Sigmoid colon (tissue), 7 donors: ENCODE measurements at regions of chrX and their contacts with region 1.

Region 1: DNA sequence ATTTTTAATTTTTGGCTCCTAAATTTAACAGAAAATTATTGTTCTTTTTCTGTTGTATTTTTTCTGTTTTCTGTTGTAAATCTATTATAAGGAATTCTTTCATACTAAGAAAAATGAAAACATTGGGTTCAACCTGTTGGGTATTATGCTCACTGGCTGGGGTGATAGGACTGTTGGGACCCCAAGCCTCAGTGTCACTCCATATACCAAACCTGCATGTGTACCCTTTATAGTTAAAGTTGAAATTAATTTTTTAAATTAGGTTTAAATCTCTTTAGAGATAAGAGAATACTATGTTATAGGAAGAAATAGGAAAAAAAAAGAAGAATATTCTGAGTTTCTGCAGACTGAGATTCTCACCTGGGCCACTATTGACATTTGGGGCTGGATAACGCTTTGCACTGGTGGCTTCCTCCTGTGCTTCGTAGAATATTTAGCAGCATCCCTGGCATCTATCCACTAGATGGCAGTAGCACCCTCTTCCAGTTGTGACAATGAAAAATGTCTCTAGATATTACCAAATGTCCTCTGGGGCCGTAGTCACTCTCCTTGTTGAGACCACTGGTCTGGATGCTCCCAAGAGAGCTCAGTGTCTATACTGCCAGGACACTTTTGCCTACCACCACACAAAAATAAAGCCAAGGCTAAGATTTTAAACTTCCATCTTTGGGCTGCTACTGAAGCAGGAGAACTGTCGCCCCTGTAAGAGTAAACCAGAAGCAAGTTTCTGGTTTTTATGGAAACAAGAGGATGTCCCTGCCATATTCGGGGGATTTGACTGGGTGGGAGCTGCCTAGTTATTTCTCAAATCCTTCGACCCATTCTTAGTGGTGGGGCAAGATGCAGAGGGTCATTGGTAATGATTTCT is 22.4 kb upstream of the CLTRN start:
- DNase-seq: no peak
- H3K4me3 ChIP-seq: no peak overlapping the region
- H3K27ac ChIP-seq: no peak overlapping the region
- H3K4me1 ChIP-seq: no peaks in the 10 kb centered on the region
- H3K27me3 ChIP-seq: no peaks in the 10 kb centered on the region
- CTCF ChIP-seq: peak in 3 of 4 experiments; percentile 18 to 63 (median 23)
- EP300 ChIP-seq: no peak
- POLR2A ChIP-seq: no peak

Region 2: DNA sequence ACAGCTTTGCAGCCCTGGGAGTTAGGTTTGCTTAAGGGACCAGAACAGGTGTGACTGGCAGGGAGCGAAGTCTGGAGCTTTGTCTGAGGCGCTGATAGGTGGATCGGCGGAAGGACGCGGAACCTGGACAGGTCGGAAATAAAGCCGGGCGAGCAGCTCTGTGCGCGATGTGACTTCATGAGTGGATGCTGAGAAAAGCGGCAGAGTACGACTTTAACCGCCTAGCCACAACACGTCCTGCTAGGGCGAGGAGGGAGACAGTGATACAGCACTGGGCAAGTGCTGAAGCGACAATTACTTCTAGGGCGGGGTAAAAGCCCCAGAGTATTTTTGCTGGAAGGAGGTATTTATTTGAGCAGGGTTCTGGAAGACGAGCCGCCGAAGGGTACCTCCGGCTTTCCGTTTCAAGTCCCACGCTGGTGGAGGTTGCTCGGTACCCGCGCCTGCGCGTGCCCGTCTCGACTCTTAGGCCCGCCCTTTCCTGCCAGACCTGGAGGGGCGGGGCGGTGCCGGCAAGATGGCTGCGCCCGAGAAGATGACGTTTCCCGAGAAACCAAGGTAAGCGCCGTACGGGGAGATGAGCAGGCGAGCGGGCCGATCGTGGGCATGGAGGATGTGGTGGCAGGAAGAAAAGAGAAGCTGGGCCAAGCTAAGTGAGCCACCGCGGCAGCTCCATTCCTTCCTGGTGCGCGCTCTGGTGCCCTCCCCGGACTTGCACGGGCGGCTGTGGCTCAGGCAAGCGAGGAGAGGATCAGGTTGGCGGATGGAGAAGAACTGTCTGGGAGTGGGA is 103.1 kb after region 1 on chrX and contains the start of gene ZRSR2:
- intact Hi-C with region 1: loop called (anchors 1 kb)
- DNase-seq: peak; percentile 92
- H3K4me3 ChIP-seq: peak within 1 kb of the TSS; percentile 59 to 88 (median 63)
- H3K27ac ChIP-seq: peak within 1 kb of the TSS; percentile 80 to 90 (median 84)
- H3K4me1 ChIP-seq: peaks cover 0 to 23% (median 4%) of the 10 kb centered on the region in 4 donors
- H3K27me3 ChIP-seq: no peaks in the 10 kb centered on the region
- CTCF ChIP-seq: no peak
- EP300 ChIP-seq: no peak
- POLR2A ChIP-seq: peak; percentile 46 to 48
- total RNA-seq, gene ZRSR2: 6.8 to 13.8 (median 11.8) TPM

Region 3: DNA sequence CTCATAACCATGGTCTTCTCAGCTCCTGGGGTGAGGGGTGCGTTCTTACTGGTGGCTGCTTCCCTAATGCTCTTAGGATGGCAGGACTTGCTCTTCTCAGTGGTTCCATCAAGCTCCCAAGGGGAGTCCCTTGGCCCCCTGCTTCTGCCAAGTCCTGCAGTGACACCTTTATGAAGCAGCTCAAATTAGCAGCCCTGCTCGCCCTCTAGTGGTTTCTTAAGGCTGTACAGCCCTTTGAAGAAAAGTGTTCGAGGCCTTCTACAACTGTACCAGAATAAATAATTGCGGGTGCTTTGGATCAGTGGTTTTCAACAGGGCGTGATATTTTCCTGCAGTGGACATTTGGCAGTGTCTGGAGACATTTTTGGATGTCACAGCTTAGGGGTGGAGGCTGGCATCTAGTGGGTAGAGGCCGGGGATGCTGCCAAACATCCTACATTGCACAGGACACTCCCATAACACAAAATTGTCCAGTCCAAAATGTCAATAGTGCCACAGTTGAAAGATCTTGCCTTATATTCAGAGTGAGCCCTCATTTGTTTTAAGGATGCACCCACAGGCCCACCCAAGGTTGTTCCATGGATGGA is 758.2 kb after region 1 on chrX:
- intact Hi-C with region 1: loop called (anchors 10 kb)
- DNase-seq: no peak
- H3K4me3 ChIP-seq: no peak overlapping the region
- H3K27ac ChIP-seq: no peak overlapping the region
- H3K4me1 ChIP-seq: no peaks in the 10 kb centered on the region
- H3K27me3 ChIP-seq: no peaks in the 10 kb centered on the region
- CTCF ChIP-seq: peak; percentile 11 to 52 (median 29)
- EP300 ChIP-seq: no peak
- POLR2A ChIP-seq: no peak

Region 4: GRCh38 chrX:16695079-16695676 is 1008.1 kb after region 1 on chrX:
- intact Hi-C with region 1: loop called (anchors 10 kb)
- DNase-seq: no peak
- H3K4me3 ChIP-seq: no peak overlapping the region
- H3K27ac ChIP-seq: no peak overlapping the region
- H3K4me1 ChIP-seq: no peaks in the 10 kb centered on the region
- H3K27me3 ChIP-seq: no peaks in the 10 kb centered on the region
- CTCF ChIP-seq: peak; percentile 27 to 66 (median 57)
- EP300 ChIP-seq: no peak
- POLR2A ChIP-seq: no peak